ENCODE measurements at regions of chr1 and their contacts with region 1.

Region 1: DNA sequence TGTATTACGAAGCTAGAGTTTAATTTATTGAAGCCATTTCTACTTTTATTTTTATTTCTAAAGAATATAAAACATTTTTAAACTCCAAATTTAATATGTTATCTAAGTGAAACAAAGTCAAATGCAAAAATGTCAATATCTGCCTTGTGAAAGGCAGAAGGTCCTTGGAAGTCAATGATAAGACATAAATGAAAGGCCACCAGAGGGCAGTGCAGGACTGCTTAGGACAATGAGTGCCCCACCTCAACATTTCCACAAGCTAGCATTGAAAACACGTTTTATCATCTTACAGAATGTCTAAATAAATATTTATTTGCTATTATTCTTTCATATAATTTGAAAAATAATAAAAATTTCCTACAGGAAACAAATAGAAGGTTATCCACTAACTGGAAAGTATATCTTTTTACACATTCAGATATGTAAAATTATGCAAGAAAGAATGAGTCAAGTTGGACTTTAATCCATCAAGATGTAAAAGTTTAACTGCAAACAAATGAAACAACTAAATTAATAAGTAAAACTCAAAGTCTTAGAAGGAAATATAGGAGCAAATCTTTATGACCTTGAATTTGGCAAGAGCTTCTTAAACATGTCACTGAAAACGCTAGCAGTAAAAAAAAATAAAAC is 140.1 kb upstream of the FMN2 start:
- DNase-seq: peak; percentile 76
- ATAC-seq: no peak
- H3K4me3 Mint-ChIP-seq: no peak overlapping the region
- H3K27ac Mint-ChIP-seq: no peak overlapping the region
- H3K4me1 Mint-ChIP-seq: no peaks in the 10 kb centered on the region
- H3K27me3 Mint-ChIP-seq: peaks cover 4% of the 10 kb centered on the region

Region 2: GRCh38 chr1:239939602-239940001 is 12.0 kb before region 1 on chr1:
- CTCF ChIA-PET with region 1: interaction called, 15 read pairs
- POLR2A ChIA-PET with region 1: no interaction called
- intact Hi-C with region 1: no loop called
- DNase-seq: no peak
- ATAC-seq: no peak
- H3K4me3 Mint-ChIP-seq: no peak overlapping the region
- H3K27ac Mint-ChIP-seq: no peak overlapping the region
- H3K4me1 Mint-ChIP-seq: no peaks in the 10 kb centered on the region
- H3K27me3 Mint-ChIP-seq: no peaks in the 10 kb centered on the region

Region 3: GRCh38 chr1:239976130-239976968 is 24.7 kb after region 1 on chr1:
- CTCF ChIA-PET with region 1: interaction called, 39 read pairs
- POLR2A ChIA-PET with region 1: no interaction called
- intact Hi-C with region 1: loop called (anchors 1 kb)
- DNase-seq: peak; percentile 70
- ATAC-seq: peak; percentile 33
- H3K4me3 Mint-ChIP-seq: no peak overlapping the region
- H3K27ac Mint-ChIP-seq: no peak overlapping the region
- H3K4me1 Mint-ChIP-seq: no peaks in the 10 kb centered on the region
- H3K27me3 Mint-ChIP-seq: peaks cover 9% of the 10 kb centered on the region

Region 4: DNA sequence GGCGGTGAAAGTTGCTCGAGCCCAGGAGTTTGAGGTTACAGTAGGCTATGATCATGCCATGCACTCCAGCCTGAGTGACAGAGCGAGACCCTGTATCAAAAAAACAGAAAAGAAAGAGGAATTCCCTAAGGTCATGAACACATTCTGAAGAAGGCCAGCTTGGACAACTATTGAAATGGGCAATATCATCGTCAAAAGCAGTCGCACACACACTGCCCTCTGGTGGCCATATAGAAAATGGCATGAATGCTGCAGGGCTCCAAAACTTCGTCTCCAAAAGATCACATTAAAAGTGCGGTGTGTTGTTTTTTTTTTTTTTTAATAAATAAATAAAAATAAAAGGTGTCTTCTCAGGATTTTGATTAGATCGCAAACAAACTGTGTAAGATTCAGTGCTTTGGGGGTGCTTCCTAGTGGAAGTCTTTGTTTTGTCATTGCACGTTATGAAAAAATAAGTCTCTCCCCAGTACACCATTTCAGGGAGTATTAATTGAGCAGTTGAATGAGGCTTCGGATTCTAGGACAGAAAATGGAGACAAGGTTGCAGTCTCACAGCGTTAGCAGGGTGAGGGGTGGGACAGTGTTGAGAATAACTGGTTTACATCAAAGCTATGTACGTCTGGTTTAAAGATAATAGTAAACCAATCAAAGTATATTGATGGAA is 52.6 kb after region 1 on chr1:
- CTCF ChIA-PET with region 1: interaction called, 22 read pairs
- POLR2A ChIA-PET with region 1: no interaction called
- intact Hi-C with region 1: no loop called
- DNase-seq: peak; percentile 35
- ATAC-seq: no peak
- H3K4me3 Mint-ChIP-seq: no peak overlapping the region
- H3K27ac Mint-ChIP-seq: no peak overlapping the region
- H3K4me1 Mint-ChIP-seq: no peaks in the 10 kb centered on the region
- H3K27me3 Mint-ChIP-seq: peaks cover 15% of the 10 kb centered on the region

Region 5: GRCh38 chr1:240149484-240150094 is 198.0 kb after region 1 on chr1:
- CTCF ChIA-PET with region 1: interaction called, 11 read pairs
- POLR2A ChIA-PET with region 1: no interaction called
- intact Hi-C with region 1: no loop called
- DNase-seq: no peak
- ATAC-seq: no peak
- H3K4me3 Mint-ChIP-seq: no peak overlapping the region
- H3K27ac Mint-ChIP-seq: no peak overlapping the region
- H3K4me1 Mint-ChIP-seq: no peaks in the 10 kb centered on the region
- H3K27me3 Mint-ChIP-seq: peaks cover 12% of the 10 kb centered on the region